ENCODE measurements at regions of chr9 and their contacts with region 1.

Region 1: DNA sequence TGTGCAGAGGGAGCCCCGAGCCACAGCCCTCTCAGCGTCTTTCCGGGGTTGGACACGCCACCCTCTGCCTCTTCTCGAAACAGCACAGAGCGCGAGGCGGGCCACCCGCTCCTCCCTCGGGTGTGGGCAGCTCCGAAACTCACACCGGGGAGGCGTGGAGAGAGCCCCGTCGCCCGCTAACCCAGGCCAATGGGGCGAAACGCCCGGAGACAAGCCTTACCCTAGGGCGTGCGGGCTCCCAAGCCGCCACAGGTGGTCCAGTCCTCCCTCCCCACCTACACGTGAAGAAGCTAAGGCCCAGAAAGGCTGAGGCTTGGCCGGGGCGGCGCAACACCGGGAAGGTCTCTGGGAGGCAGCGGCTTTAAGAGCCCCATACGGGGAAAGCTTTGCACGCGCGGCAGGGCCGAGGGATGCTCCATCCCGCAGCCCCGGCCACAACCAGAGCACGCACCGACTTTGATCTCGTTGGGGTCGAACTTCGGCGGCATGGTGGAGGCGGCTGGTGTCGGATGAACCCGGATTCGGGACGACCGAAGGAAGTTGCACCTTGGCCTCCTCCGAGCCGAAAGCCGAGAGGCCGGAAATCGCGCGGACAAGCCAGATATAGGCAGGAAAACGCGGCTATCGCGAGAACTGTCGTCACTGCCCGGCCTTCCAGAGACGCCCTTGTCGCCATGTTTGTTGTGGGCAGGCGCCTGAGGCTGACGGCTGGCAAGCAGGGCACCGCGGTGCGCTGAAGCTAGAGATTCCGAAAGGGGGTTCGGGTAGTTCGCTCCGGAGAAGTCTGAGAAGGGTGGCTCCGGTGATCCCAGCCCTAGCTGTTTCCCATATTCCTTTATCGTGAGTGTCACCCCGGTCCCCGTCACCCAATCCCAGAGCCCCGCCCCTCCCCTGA is at the starts of genes LRSAM1 and RPL12:
- DNase-seq: peak; percentile 97 to 100 (median 99)
- ATAC-seq: peak; percentile 82
- H3K4me3 ChIP-seq: peak within 1 kb of the TSS; percentile 90 to 94
- H3K4me3 Mint-ChIP-seq: peak within 1 kb of the TSS; percentile 96
- H3K27ac ChIP-seq: peak within 1 kb of the TSS; percentile 85
- H3K27ac Mint-ChIP-seq: peak within 1 kb of the TSS; percentile 96
- H3K4me1 ChIP-seq: peaks cover 31% of the 10 kb centered on the region
- H3K4me1 Mint-ChIP-seq: peaks cover 44% of the 10 kb centered on the region
- H3K27me3 ChIP-seq: no peaks in the 10 kb centered on the region
- H3K27me3 Mint-ChIP-seq: no peaks in the 10 kb centered on the region
- CTCF ChIP-seq: peak; percentile 21
- total RNA-seq, gene LRSAM1: 11.7 to 14.0 TPM
- total RNA-seq, gene RPL12: 1,908 to 1,959 TPM

Region 2: GRCh38 chr9:127214421-127215267 is 236.4 kb before region 1 on chr9:
- CTCF ChIA-PET with region 1: interaction called, 3 read pairs
- POLR2A ChIA-PET with region 1: interaction called, 6 read pairs
- intact Hi-C with region 1: loop called (anchors 2 to 5 kb)
- DNase-seq: peak; percentile 36 to 73 (median 64)
- ATAC-seq: peak; percentile 93
- H3K4me3 ChIP-seq: no peak overlapping the region
- H3K4me3 Mint-ChIP-seq: no peak overlapping the region
- H3K27ac ChIP-seq: no peak overlapping the region
- H3K27ac Mint-ChIP-seq: no peak overlapping the region
- H3K4me1 ChIP-seq: no peaks in the 10 kb centered on the region
- H3K4me1 Mint-ChIP-seq: peaks cover 3% of the 10 kb centered on the region
- H3K27me3 ChIP-seq: no peaks in the 10 kb centered on the region
- H3K27me3 Mint-ChIP-seq: peaks cover 8% of the 10 kb centered on the region
- CTCF ChIP-seq: peak; percentile 69

Region 3: DNA sequence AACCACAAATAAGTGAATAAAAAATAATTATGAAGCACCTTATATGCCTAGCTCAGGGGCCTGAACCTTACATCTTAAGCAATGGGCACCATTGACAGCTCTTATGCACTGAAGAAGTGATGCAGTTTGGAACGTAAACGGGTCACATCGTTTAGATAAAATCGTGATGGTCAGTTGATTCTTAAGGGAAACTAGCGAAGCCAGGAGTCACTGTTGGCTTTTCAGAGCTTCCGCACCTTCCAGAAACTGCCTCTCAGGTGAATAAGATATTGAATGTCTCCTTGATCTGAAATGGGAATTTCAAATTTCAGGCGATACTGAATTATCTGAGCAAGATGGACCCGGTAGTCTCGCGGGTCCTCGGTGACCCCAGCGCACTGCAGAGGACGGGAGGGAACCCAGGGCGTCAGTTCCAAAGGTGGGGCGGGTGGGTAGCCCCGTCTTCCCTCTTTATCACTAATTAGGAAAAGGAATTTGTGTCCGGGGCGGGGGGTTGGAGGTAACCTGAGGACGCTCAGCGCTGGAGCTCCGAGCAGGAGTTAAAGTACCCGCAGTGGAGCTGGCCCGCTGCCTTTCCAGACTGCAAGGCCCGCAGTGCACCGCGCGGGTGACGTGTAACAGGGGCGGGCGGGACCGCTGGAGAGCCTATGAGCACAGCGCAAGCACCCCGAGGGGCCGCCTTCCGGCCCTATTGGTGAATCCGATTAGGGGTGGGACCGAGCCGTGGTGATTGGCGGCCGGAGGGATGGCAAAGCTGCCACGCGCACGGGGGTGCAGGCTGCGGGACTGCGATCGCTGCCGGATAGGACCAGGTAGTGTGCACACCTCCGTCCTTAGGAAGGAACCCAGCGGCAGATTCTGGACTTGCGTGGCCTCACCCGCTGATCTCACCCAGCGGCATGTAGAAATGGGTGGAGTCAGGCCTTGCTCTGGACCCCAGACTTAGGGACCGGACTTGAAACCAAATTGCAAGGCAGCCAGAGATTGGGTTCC is 206.2 kb before region 1 on chr9:
- CTCF ChIA-PET with region 1: no interaction called
- POLR2A ChIA-PET with region 1: interaction called, 8 read pairs
- intact Hi-C with region 1: loop called (anchors 1 kb)
- DNase-seq: peak; percentile 88 to 96 (median 94)
- ATAC-seq: peak; percentile 100
- H3K4me3 ChIP-seq: peak overlapping the region; percentile 57 to 76
- H3K4me3 Mint-ChIP-seq: peak overlapping the region; percentile 86
- H3K27ac ChIP-seq: peak overlapping the region in 1 of 2 experiments; percentile 12
- H3K27ac Mint-ChIP-seq: no peak overlapping the region
- H3K4me1 ChIP-seq: peaks cover 6% of the 10 kb centered on the region
- H3K4me1 Mint-ChIP-seq: peaks cover 15% of the 10 kb centered on the region
- H3K27me3 ChIP-seq: no peaks in the 10 kb centered on the region
- H3K27me3 Mint-ChIP-seq: peaks cover 7% of the 10 kb centered on the region
- CTCF ChIP-seq: no peak

Region 4: DNA sequence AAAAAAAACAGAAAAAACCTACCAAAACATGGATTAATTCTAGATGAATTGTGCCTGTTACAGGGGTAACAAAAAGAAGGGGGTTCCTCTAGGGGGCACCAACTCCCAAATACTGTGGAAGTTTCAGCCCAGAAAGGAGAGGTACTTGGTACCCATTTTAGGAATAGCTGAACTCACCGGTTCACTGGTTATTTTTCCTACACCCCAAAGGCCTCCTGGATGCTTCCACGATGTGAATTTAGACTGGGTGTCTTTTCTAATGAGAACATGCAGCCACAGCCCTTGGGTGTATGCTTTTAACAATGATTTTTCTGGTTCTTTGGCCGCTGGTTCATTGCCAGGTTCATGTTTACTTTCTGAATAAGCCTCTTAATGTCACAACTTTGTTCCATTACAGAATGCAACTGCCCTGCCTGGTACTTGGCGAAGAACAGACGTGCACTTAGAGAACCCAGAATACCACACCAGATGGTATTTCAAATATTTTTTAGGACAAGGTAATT is 139.8 kb before region 1 on chr9:
- CTCF ChIA-PET with region 1: interaction called, 3 read pairs
- POLR2A ChIA-PET with region 1: no interaction called
- intact Hi-C with region 1: loop called in 1 of 2 experiments (anchors 2 kb)
- DNase-seq: peak in 7 of 9 experiments; percentile 6 to 57 (median 40)
- ATAC-seq: no peak
- H3K4me3 ChIP-seq: no peak overlapping the region
- H3K4me3 Mint-ChIP-seq: no peak overlapping the region
- H3K27ac ChIP-seq: no peak overlapping the region
- H3K27ac Mint-ChIP-seq: no peak overlapping the region
- H3K4me1 ChIP-seq: no peaks in the 10 kb centered on the region
- H3K4me1 Mint-ChIP-seq: no peaks in the 10 kb centered on the region
- H3K27me3 ChIP-seq: no peaks in the 10 kb centered on the region
- H3K27me3 Mint-ChIP-seq: peaks cover 25% of the 10 kb centered on the region
- CTCF ChIP-seq: no peak

Region 5: GRCh38 chr9:127396808-127397497 is 54.1 kb before region 1 on chr9 and contains the start of gene SLC2A8:
- CTCF ChIA-PET with region 1: no interaction called
- POLR2A ChIA-PET with region 1: interaction called, 6 read pairs
- intact Hi-C with region 1: loop called (anchors 1 kb)
- DNase-seq: peak; percentile 73 to 98 (median 86)
- ATAC-seq: peak; percentile 92
- H3K4me3 ChIP-seq: peak within 1 kb of the TSS; percentile 44 to 49
- H3K4me3 Mint-ChIP-seq: peak within 1 kb of the TSS; percentile 76
- H3K27ac ChIP-seq: no peak within 1 kb of the TSS
- H3K27ac Mint-ChIP-seq: no peak within 1 kb of the TSS
- H3K4me1 ChIP-seq: peaks cover 24% of the 10 kb centered on the region
- H3K4me1 Mint-ChIP-seq: peaks cover 17% of the 10 kb centered on the region
- H3K27me3 ChIP-seq: peaks cover 19 to 40% of the 10 kb centered on the region in 2 experiments
- H3K27me3 Mint-ChIP-seq: peaks cover 68% of the 10 kb centered on the region
- CTCF ChIP-seq: no peak
- total RNA-seq, gene SLC2A8: 3.6 to 3.9 TPM

Region 6: GRCh38 chr9:127437497-127438264 is 13.4 kb before region 1 on chr9:
- CTCF ChIA-PET with region 1: interaction called, 3 read pairs
- POLR2A ChIA-PET with region 1: interaction called, 14 read pairs
- intact Hi-C with region 1: no loop called
- DNase-seq: peak in 7 of 9 experiments; percentile 9 to 76 (median 55)
- ATAC-seq: peak; percentile 80
- H3K4me3 ChIP-seq: no peak overlapping the region
- H3K4me3 Mint-ChIP-seq: no peak overlapping the region
- H3K27ac ChIP-seq: peak overlapping the region in 1 of 2 experiments; percentile 30
- H3K27ac Mint-ChIP-seq: peak overlapping the region; percentile 75
- H3K4me1 ChIP-seq: no peaks in the 10 kb centered on the region
- H3K4me1 Mint-ChIP-seq: peaks cover 16% of the 10 kb centered on the region
- H3K27me3 ChIP-seq: no peaks in the 10 kb centered on the region
- H3K27me3 Mint-ChIP-seq: no peaks in the 10 kb centered on the region
- CTCF ChIP-seq: no peak

Region 7: DNA sequence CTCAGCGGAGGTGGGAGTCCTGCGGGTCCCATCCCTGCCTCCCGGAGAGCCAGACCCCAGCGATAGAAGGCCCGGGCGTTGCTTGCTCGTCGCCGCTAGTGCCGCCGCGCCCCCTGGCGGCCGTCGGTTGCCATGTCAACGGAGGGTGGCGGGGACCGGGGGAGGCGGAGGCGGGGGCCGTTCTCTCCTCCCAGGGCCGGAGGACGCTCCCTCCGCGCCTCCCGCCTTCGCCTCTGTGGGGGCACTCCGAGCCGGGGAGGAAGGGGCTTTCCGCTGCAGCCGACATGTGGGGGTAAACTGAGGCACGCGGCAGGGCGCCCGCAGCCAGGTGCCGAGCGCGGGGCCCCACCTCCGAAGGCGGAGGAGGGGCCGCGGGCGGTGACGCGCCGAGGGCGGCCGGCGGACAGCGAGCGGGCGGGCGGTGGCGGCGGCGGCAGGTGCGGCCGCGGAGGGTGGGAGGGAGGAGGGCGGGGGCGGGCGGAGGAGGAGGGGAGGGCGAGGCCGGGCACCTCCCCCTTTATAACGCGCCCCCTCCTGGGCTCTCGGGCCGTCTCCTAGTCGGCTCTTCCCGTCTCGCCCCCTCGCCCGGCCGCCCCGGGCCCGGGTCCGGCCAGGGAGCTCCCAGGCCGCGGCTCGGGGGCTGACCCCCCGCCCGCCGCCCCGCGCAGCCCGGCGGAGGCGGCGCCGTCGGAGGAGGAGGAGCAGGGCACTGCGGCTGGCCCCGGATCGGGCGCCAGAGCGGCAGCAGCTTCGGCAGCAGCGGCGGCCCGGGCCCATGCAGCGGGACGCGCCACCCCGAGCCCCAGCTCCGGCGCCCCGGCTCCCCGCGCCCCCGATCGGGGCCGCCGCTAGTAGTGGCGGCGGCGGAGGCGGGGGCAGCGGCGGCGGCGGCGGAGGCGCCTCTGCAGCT is 334.2 kb after region 1 on chr9:
- CTCF ChIA-PET with region 1: no interaction called
- POLR2A ChIA-PET with region 1: interaction called, 3 read pairs
- intact Hi-C with region 1: loop called in 1 of 2 experiments (anchors 2 kb)
- DNase-seq: peak; percentile 85 to 97 (median 91)
- ATAC-seq: peak; percentile 53
- H3K4me3 ChIP-seq: peak overlapping the region; percentile 49 to 82
- H3K4me3 Mint-ChIP-seq: peak overlapping the region; percentile 89
- H3K27ac ChIP-seq: peak overlapping the region; percentile 73 to 94
- H3K27ac Mint-ChIP-seq: peak overlapping the region; percentile 96
- H3K4me1 ChIP-seq: peaks cover 66% of the 10 kb centered on the region
- H3K4me1 Mint-ChIP-seq: peaks cover 60% of the 10 kb centered on the region
- H3K27me3 ChIP-seq: no peaks in the 10 kb centered on the region
- H3K27me3 Mint-ChIP-seq: no peaks in the 10 kb centered on the region
- CTCF ChIP-seq: peak; percentile 74